Heart left ventricle (tissue), 16 donors: ENCODE measurements at regions of chr12 and their contacts with region 1.

Region 1: DNA sequence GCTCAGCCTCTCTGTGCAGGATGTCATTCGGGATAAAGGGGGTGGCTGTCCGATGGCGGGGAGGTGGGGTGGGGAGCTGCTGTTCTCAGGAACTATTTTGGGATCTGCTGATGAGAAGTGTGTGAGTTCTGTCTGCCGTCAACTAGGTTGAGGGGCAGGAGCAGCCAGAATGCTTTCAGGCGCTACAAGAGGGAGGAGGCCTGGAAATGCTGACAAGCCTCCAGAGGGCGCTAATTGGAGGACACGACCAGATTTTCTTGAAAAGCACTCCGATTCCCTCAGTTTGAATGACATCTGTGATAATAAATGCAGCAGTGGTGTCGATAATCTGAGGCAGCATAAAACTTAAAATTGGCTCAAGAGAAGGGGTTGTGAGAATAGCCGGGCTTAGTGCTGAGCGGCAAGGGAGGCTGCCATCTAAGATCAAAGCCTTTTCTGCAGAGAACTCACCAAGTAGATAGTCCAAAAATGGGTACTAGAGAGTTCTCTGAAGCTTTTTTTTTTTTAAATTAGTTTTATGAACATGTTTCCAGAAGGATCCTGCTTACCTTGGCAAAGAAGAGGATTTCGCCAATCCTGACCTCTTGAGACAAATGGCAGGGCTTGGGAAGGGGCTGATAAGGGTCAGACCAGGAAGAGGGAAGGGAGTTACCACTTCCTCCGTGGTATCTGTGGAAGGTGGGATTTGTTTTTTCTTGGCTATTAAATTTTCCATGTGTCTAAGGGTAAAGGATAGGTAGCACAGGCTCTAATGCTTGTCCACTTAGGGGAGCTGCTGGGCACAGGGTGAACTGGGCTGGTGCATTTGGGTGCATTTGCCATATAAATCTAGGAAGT is 94.4 kb downstream of the CRACR2A start:
- DNase-seq: peak in 3 of 5 donors; percentile 28 to 44 (median 41)
- ATAC-seq: peak; percentile 47 to 77 (median 56)
- H3K4me3 ChIP-seq: no peak overlapping the region
- H3K27ac ChIP-seq: no peak overlapping the region
- H3K4me1 ChIP-seq: peaks cover 0 to 19% (median 5%) of the 10 kb centered on the region in 12 donors
- H3K27me3 ChIP-seq: no peaks in the 10 kb centered on the region
- CTCF ChIP-seq: peak; percentile 26 to 62 (median 46)
- POLR2A ChIP-seq: no peak

Region 2: GRCh38 chr12:3712209-3712992 is 53.9 kb after region 1 on chr12:
- intact Hi-C with region 1: loop called in 1 of 10 experiments (anchors 1 kb)
- DNase-seq: no peak
- ATAC-seq: no peak
- H3K4me3 ChIP-seq: no peak overlapping the region
- H3K27ac ChIP-seq: no peak overlapping the region
- H3K4me1 ChIP-seq: no peaks in the 10 kb centered on the region
- H3K27me3 ChIP-seq: no peaks in the 10 kb centered on the region
- CTCF ChIP-seq: no peak
- POLR2A ChIP-seq: no peak